CD8-positive, alpha-beta memory T cell (primary cell): ENCODE measurements at regions of chr11 and their contacts with region 1.

Region 1: DNA sequence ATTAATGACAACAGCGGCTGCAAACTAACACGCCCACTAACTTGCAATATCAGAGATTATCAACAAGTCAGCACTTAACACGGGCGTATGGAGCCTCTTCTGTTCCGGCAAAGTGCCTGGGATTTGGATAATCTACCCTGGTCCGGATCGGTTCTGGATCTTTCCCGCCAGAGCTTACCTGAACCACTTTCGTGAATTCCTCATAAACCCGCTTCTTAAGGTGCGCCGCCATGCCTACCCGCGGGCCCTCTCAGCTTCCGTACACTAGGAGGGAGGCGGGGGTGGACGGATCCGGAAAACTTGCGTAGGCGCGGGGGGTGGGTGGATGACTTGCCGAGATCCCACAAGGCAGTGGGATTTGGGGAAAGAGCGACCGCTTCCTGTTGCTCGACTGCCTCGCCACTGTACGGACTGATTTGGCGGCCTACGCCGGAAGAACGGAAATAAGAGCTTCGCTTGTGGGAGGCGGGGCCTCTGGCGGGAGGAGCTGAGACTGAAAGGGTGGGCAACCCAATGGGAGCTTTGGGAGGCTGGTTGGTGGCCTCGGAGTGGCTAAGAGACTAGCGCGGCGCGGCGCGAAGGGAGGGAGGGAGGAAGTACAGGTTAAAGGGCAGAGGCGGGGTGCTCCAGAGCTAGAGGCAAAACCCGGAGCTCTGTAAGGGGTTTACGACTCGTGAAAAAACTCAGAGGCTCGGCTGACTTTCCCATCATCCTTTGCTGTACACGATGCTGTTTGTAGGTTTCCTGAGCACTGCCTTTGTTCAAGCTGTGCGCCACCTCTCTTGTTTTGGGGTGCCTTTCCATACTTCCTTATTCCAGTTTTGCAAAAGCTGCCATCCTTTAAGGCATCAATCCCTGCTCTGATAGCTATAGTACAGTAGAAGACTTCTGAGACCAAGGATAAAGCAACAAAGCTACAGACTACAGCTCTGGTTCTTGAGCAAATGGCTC is at the start of gene INTS4:
- DNase-seq: peak; percentile 96 to 99 (median 98)
- H3K4me3 ChIP-seq: peak within 1 kb of the TSS; percentile 95
- H3K4me3 Mint-ChIP-seq: peak within 1 kb of the TSS; percentile 87 to 97 (median 93)
- H3K27ac ChIP-seq: peak within 1 kb of the TSS; percentile 78
- H3K27ac Mint-ChIP-seq: peak within 1 kb of the TSS; percentile 94 to 99 (median 96)
- H3K4me1 ChIP-seq: peaks cover 25% of the 10 kb centered on the region
- H3K4me1 Mint-ChIP-seq: peaks cover 30 to 52% (median 43%) of the 10 kb centered on the region in 3 donors
- H3K27me3 ChIP-seq: no peaks in the 10 kb centered on the region
- H3K27me3 Mint-ChIP-seq: no peaks in the 10 kb centered on the region
- total RNA-seq, gene INTS4: 52.2 to 54.9 TPM

Region 2: GRCh38 chr11:77820563-77821348 is 173.9 kb before region 1 on chr11 and contains the starts of genes AAMDC and RSF1:
- CTCF ChIA-PET with region 1: interaction called, 6 read pairs
- POLR2A ChIA-PET with region 1: interaction called, 12 read pairs
- DNase-seq: peak; percentile 96 to 99 (median 97)
- H3K4me3 ChIP-seq: peak within 1 kb of the TSS; percentile 91
- H3K4me3 Mint-ChIP-seq: peak within 1 kb of the TSS; percentile 93 to 100 (median 99)
- H3K27ac ChIP-seq: peak within 1 kb of the TSS; percentile 77
- H3K27ac Mint-ChIP-seq: peak within 1 kb of the TSS; percentile 89 to 99 (median 96)
- H3K4me1 ChIP-seq: peaks cover 40% of the 10 kb centered on the region
- H3K4me1 Mint-ChIP-seq: peaks cover 37 to 44% (median 43%) of the 10 kb centered on the region in 3 donors
- H3K27me3 ChIP-seq: no peaks in the 10 kb centered on the region
- H3K27me3 Mint-ChIP-seq: no peaks in the 10 kb centered on the region
- total RNA-seq, gene AAMDC: 4.3 to 4.9 TPM
- total RNA-seq, gene RSF1: 54.2 to 57.0 TPM

Region 3: GRCh38 chr11:77968337-77968736 is 26.4 kb before region 1 on chr11:
- CTCF ChIA-PET with region 1: no interaction called
- POLR2A ChIA-PET with region 1: no interaction called
- DNase-seq: no peak
- H3K4me3 ChIP-seq: no peak overlapping the region
- H3K4me3 Mint-ChIP-seq: no peak overlapping the region
- H3K27ac ChIP-seq: no peak overlapping the region
- H3K27ac Mint-ChIP-seq: no peak overlapping the region
- H3K4me1 ChIP-seq: no peaks in the 10 kb centered on the region
- H3K4me1 Mint-ChIP-seq: no peaks in the 10 kb centered on the region
- H3K27me3 ChIP-seq: no peaks in the 10 kb centered on the region
- H3K27me3 Mint-ChIP-seq: no peaks in the 10 kb centered on the region

Region 4: DNA sequence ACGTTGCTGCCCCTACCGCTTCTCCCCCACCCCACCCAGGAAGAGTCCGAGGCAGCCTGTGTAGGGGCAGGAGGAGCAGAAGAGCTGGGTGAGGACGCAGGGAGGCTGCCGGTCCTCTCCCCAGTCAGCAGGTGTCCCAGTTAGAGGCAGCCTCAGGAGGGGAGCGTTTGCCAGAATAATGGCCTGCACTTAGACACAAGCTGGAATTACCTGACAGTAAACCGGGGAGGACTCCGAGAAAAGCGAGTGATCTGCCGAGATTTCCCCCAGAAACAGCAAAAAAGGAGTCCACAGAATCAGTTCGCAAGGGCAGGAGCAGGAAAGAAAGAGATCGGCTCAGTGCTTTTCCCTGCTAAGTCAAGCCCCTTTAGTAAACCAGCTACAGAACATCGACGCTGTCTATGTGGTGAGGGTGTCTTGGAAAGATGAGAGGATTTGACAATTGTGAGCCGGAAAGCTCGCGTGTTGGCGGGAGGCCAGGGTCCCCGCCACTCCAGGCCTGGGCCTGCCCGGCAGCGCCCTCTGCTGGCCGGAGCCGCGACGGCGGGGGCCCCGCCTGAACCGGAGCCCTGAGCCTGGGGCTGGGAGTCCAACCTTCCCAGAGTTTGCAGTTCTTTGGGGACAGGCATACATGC is 51.3 kb after region 1 on chr11:
- CTCF ChIA-PET with region 1: interaction called, 9 read pairs
- POLR2A ChIA-PET with region 1: interaction called, 11 read pairs
- DNase-seq: peak; percentile 66 to 80 (median 72)
- H3K4me3 ChIP-seq: peak overlapping the region; percentile 45
- H3K4me3 Mint-ChIP-seq: peak overlapping the region; percentile 50 to 79 (median 66)
- H3K27ac ChIP-seq: no peak overlapping the region
- H3K27ac Mint-ChIP-seq: peak overlapping the region in 5 of 8 donors; percentile 29 to 73 (median 48)
- H3K4me1 ChIP-seq: peaks cover 5% of the 10 kb centered on the region
- H3K4me1 Mint-ChIP-seq: peaks cover 7 to 12% (median 12%) of the 10 kb centered on the region in 3 donors
- H3K27me3 ChIP-seq: no peaks in the 10 kb centered on the region
- H3K27me3 Mint-ChIP-seq: no peaks in the 10 kb centered on the region